ENCODE measurements at regions of chr10 and their contacts with region 1.

Region 1: DNA sequence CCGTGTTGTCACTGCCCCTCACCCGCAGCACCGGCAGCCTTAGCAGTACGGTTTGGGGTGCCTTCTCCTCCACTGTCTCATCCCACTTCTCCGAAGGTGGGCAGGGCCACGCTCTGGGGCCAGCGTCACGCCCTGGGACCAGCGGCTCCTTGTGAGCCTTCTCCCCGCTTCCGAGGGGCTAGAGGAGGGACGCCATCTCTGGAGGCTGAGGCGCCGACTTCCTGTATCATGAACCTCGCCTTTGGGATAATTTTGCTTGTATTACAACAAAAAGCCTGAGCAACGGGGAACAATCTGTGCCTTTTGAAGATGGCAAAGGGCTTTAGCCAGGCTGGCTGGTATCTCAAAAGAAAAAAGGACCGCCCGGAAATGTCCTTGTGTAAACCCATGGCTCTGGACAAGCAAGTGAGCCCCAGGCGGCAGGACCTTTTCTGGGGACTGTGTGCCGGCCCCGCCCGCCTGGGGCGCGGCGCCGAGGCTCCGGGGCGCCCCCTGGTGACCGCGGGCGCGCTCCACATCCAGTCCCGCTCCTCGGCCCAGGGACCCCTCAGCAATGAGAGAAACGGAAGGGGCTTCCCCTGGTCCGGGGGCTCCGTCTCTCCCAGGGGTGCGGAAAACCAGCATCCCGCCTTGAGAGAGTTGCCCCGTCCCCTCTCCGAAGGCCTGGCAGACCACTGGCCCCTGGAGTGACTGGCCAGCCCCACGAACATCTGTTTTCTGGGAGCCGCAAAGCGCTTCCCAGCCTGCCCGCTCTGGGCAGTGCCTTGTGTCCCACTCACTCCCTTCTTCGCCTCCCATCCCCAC is 3.8 kb downstream of the DEPP1 start:
- DNase-seq: peak in 1 of 2 experiments; percentile 81
- H3K4me3 ChIP-seq: peak overlapping the region; percentile 54; the same call in 1 of the 2 replicates
- H3K27ac ChIP-seq: no peak overlapping the region
- H3K4me1 ChIP-seq: peaks cover 54% of the 10 kb centered on the region
- H3K27me3 ChIP-seq: no peaks in the 10 kb centered on the region
- CTCF ChIP-seq: peak; percentile 92

Region 2: DNA sequence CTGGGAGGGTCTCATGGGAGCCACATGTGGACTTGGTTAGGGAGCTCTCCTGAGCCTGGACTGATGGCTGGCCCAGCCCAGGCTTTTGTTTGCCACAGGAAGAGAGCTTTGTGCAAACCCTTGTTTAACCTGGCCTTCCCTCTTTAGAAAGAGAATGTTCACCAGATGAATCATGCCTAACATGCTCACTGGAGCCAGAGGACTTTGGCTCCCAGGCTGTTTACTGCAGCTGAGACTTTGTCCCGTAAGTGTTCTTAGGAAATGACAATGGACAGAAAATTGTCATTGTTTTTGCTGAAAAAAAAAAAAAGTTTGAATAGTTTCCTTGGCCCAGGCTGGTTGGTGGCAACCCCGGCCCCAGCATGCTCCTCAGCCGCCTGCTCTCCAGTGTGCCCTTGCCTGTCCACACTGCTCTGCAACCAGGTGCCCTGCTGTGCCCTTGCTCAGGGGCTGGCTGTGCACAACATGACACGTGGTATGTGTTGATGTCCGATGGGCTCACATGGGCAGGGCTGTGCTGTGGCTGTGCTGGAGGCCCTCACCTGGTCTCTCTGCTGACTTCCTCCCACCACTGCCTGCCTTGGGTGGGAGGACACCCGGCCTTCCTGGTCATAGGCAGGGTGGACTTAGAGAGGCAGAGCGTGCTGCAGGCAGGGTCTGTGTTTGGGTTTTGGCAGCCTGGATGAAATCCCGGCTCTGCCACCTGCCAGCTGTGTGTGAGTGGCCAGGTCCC is 1110.8 kb before region 1 on chr10:
- CTCF ChIA-PET with region 1: no interaction called
- POLR2A ChIA-PET with region 1: no interaction called
- intact Hi-C with region 1: loop called (anchors 5 kb)
- DNase-seq: peak; percentile 61 to 77
- H3K4me3 ChIP-seq: no peak overlapping the region
- H3K27ac ChIP-seq: no peak overlapping the region
- H3K4me1 ChIP-seq: no peaks in the 10 kb centered on the region
- H3K27me3 ChIP-seq: peaks cover 14% of the 10 kb centered on the region
- CTCF ChIP-seq: no peak

Region 3: DNA sequence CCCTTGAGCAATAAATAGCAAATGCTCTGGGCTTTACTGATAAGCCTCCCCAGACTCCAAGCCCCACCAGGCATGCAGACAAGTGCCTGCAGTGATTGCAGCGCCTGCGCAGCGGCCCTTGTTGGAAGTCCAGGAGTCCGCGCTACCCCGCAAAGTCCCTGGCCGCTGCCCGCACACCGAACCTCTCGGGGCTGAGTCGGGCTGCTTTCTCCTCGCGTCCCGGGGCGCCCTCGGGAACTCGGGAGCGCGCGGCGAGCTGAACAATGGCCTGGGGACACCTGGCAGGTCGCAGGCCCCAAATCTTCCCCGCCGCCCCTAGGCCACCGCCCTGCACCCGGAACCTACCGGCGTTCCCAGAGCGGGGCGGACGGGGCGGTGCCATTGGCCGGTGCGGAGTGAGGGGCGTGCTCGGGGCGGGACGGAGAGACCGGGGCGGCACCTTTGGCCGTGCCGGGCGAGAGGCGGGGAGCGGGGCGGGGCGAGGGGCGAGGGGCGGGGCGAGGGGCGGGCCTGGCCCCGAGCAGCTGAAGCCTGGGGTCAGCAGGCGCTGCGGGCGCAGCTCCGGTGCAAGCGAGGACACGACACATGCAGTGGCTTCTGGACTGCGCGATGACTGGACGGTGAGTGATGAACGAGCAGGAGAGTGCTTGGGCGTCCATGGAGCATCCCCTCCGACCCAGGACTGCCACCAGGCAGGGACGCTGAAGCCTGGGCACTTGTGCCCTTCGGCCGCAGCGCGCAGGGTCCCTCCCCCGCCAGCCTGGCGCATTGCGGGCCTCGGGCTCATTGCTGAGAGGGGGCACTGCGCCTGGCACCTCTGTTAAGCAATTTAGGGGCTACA is 15.4 kb before region 1 on chr10 and contains the start of gene RASSF4:
- CTCF ChIA-PET with region 1: interaction called, 4 read pairs
- POLR2A ChIA-PET with region 1: interaction called, 10 read pairs
- intact Hi-C with region 1: loop called (anchors 1 kb)
- DNase-seq: peak; percentile 82 to 96
- H3K4me3 ChIP-seq: peak within 1 kb of the TSS; percentile 80
- H3K27ac ChIP-seq: peak within 1 kb of the TSS; percentile 56
- H3K4me1 ChIP-seq: peaks cover 17% of the 10 kb centered on the region
- H3K27me3 ChIP-seq: no peaks in the 10 kb centered on the region
- CTCF ChIP-seq: no peak
- total RNA-seq, gene RASSF4: 6.5 and 7.6 TPM in 2 replicates

Region 4: GRCh38 chr10:45000752-45001380 is 26.0 kb after region 1 on chr10 and contains the start of gene ZNF22:
- CTCF ChIA-PET with region 1: interaction called, 15 read pairs
- POLR2A ChIA-PET with region 1: interaction called, 13 read pairs
- intact Hi-C with region 1: loop called (anchors 1 kb)
- DNase-seq: peak; percentile 35 to 67
- H3K4me3 ChIP-seq: peak within 1 kb of the TSS; percentile 65
- H3K27ac ChIP-seq: peak within 1 kb of the TSS; percentile 60
- H3K4me1 ChIP-seq: peaks cover 41% of the 10 kb centered on the region
- H3K27me3 ChIP-seq: no peaks in the 10 kb centered on the region
- CTCF ChIP-seq: no peak
- total RNA-seq, gene ZNF22: 22.4 and 29.9 TPM in 2 replicates

Region 5: GRCh38 chr10:45505311-45505710 is 530.5 kb after region 1 on chr10:
- CTCF ChIA-PET with region 1: no interaction called
- POLR2A ChIA-PET with region 1: interaction called, 10 read pairs
- intact Hi-C with region 1: no loop called
- DNase-seq: no peak
- H3K4me3 ChIP-seq: no peak overlapping the region
- H3K27ac ChIP-seq: no peak overlapping the region
- H3K4me1 ChIP-seq: no peaks in the 10 kb centered on the region
- H3K27me3 ChIP-seq: no peaks in the 10 kb centered on the region
- CTCF ChIP-seq: no peak